Ascending aorta (tissue), 2 donors: ENCODE measurements at regions of chr6 and their contacts with region 1.

Region 1: DNA sequence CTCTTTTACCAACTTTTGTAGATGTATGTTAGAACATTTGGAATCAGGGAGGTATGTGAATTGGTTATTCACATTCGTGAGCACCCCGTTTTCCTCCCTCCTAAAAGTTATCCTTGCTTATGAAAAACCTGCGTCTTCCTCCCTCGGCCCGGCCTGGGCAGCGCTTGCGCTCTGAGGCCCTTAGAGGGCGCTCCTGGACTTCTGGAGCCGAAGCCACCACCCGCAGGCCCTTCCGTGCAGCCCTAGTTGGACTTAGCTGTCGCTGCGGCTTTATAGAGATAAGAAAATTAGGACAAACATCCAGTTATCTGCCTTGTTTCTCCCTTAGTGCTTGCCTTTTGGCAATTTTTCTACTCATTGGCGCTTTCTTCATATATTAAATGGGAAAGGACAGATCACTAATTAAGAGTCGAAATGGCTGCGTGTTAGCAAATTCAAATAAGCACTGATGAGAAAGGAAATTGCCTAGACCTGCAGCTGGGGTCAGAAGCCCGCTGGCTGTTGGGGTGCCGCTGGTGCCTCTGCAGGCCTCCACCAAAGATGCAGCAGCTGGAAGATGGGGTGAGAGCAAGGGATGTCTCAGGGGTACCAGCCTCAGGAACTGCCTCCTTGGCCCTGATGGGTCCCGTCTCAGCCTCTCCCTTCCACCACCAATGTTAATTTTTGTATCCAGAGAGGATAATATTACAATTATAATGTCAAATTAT is 5.2 kb downstream of the FNDC1 start:
- DNase-seq: peak in 1 of 2 donors; percentile 82
- H3K4me3 ChIP-seq: peak overlapping the region in 1 of 2 donors; percentile 28
- H3K27ac ChIP-seq: no peak overlapping the region
- H3K4me1 ChIP-seq: peaks cover 0 to 7% of the 10 kb centered on the region in 2 donors
- H3K27me3 ChIP-seq: no peaks in the 10 kb centered on the region
- CTCF ChIP-seq: peak; percentile 75 to 99 (median 95)

Region 2: DNA sequence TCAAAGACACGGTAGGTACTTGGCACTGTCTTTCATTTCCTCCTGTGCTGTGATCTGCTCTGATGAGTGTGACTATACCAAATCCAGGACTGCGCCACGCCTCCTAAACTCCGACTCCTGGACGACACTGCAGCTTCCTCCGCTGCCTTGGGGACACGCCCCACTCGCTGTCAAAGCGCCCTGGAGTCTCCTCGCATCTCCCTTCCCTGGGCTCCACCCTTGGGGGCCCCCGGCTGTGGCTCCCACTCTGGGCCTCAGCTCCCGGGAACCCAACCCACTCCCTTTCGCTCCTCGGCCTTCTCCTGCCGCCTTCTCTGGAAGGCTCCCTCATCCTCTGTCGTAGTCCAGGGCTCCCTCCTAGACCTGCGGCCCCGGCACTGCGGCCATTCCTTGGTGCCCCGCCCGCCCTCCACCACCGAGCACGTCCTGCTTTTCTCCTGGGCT is 235.6 kb before region 1 on chr6:
- intact Hi-C with region 1: no loop called
- DNase-seq: no peak
- H3K4me3 ChIP-seq: peak overlapping the region in 1 of 2 donors; percentile 25
- H3K27ac ChIP-seq: no peak overlapping the region
- H3K4me1 ChIP-seq: no peaks in the 10 kb centered on the region
- H3K27me3 ChIP-seq: no peaks in the 10 kb centered on the region
- CTCF ChIP-seq: no peak

Region 3: DNA sequence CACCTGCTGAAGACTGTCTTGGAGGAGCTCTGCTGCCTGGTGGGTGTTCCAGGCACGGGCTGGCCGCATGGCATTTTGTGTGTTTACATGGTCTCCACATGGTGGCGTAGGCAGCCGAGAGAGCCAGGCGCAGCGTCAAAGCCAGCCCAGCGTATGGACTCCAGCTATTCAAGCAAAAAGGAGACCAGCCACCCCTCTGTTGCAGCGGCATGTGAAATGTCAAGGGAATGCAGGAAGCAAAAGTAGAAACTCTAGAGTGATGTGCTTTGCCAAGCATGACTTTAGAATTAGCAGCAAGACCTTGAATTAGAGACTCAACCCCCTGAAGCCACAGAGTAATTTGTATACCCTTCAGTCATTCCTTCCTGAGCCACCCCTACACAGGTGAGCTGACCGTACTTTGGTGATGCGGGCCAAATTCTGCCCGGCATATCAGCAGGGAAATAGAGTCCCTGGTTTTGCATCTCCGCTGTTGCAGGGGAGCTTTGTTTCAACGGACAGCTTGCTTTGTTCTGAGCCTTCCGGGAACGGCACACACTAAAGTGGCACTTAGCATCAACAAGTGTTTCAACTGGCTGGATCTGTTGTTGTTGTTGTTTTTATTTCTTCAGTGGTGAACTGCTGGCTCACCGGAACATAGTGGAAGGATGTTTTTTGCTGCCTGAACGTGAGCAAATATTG is 43.3 kb after region 1 on chr6:
- intact Hi-C with region 1: no loop called
- DNase-seq: no peak
- H3K4me3 ChIP-seq: no peak overlapping the region
- H3K27ac ChIP-seq: no peak overlapping the region
- H3K4me1 ChIP-seq: peaks cover 0 to 4% of the 10 kb centered on the region in 2 donors
- H3K27me3 ChIP-seq: no peaks in the 10 kb centered on the region
- CTCF ChIP-seq: peak; percentile 34 to 66 (median 52)

Region 4: GRCh38 chr6:159233365-159234101 is 59.1 kb after region 1 on chr6:
- intact Hi-C with region 1: no loop called
- DNase-seq: no peak
- H3K4me3 ChIP-seq: no peak overlapping the region
- H3K27ac ChIP-seq: no peak overlapping the region
- H3K4me1 ChIP-seq: no peaks in the 10 kb centered on the region
- H3K27me3 ChIP-seq: no peaks in the 10 kb centered on the region
- CTCF ChIP-seq: no peak

Region 5: GRCh38 chr6:159252955-159253508 is 78.6 kb after region 1 on chr6:
- intact Hi-C with region 1: loop called (anchors 10 kb)
- DNase-seq: no peak
- H3K4me3 ChIP-seq: no peak overlapping the region
- H3K27ac ChIP-seq: no peak overlapping the region
- H3K4me1 ChIP-seq: peaks cover 5 to 9% of the 10 kb centered on the region in 2 donors
- H3K27me3 ChIP-seq: no peaks in the 10 kb centered on the region
- CTCF ChIP-seq: peak in 2 of 3 experiments; percentile 51 to 64

Region 6: GRCh38 chr6:159376516-159377158 is 202.2 kb after region 1 on chr6:
- intact Hi-C with region 1: loop called (anchors 5 kb)
- DNase-seq: no peak
- H3K4me3 ChIP-seq: peak overlapping the region in 1 of 2 donors; percentile 20
- H3K27ac ChIP-seq: peak overlapping the region; percentile 68 to 73
- H3K4me1 ChIP-seq: peaks cover 5 to 41% of the 10 kb centered on the region in 2 donors
- H3K27me3 ChIP-seq: no peaks in the 10 kb centered on the region
- CTCF ChIP-seq: no peak

Region 7: GRCh38 chr6:159595173-159595572 is 420.8 kb after region 1 on chr6:
- intact Hi-C with region 1: loop called (anchors 5 kb)
- DNase-seq: peak; percentile 22 to 87
- H3K4me3 ChIP-seq: peak overlapping the region in 1 of 2 donors; percentile 24
- H3K27ac ChIP-seq: peak overlapping the region; percentile 89 to 90
- H3K4me1 ChIP-seq: peaks cover 3 to 13% of the 10 kb centered on the region in 2 donors
- H3K27me3 ChIP-seq: no peaks in the 10 kb centered on the region
- CTCF ChIP-seq: no peak

Region 8: GRCh38 chr6:160146454-160147145 is 972.2 kb after region 1 on chr6:
- intact Hi-C with region 1: no loop called
- DNase-seq: peak; percentile 49 to 83
- H3K4me3 ChIP-seq: no peak overlapping the region
- H3K27ac ChIP-seq: peak overlapping the region; percentile 75 to 80
- H3K4me1 ChIP-seq: peaks cover 13 to 30% of the 10 kb centered on the region in 2 donors
- H3K27me3 ChIP-seq: no peaks in the 10 kb centered on the region
- CTCF ChIP-seq: no peak